Caco-2 (cell line): ENCODE measurements at regions of chr17 and their contacts with region 1.

Region 1: DNA sequence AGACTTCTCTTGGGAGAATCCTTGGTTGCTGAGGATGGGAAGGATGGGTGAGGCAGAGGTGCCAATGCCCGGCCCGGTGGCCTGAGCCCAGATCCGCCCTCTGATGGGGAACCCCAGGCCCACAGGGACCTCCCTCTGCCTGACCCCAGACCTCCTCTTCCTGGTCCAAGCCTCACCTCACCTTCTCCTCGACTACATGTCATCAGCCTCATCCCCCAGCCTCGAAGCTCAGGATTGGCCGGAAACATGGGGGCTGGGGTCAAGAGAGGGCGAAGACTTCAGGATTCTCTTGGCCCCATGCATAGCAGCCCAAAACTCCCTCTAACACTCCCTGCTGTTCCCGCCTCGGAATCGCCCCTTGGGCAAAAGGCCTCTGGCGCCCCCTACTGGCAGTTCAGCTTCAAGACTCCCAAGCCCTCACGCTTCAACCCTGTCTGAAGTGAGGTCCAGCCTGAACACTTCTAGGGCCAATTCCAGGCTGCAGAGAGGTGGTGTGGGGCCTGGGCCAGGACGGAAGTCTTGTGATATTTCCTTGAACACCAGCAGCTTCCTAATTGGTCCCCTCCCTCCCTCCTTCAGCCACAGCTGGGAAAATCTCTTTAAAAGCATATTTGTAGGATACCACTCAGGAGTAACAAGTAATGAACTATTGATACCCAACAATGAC is 47.2 kb downstream of the ARHGAP27 start:
- DNase-seq: peak; percentile 87 to 94
- H3K4me3 ChIP-seq: no peak overlapping the region
- H3K4me3 Mint-ChIP-seq: no peak overlapping the region
- H3K27ac Mint-ChIP-seq: peak overlapping the region; percentile 6
- H3K4me1 ChIP-seq: peaks cover 8% of the 10 kb centered on the region; the same call in 1 of the 2 replicates
- H3K4me1 Mint-ChIP-seq: peaks cover 28% of the 10 kb centered on the region
- H3K27me3 ChIP-seq: no peaks in the 10 kb centered on the region
- H3K27me3 Mint-ChIP-seq: peaks cover 3% of the 10 kb centered on the region
- CTCF ChIP-seq: peak; percentile 97 to 98

Region 2: DNA sequence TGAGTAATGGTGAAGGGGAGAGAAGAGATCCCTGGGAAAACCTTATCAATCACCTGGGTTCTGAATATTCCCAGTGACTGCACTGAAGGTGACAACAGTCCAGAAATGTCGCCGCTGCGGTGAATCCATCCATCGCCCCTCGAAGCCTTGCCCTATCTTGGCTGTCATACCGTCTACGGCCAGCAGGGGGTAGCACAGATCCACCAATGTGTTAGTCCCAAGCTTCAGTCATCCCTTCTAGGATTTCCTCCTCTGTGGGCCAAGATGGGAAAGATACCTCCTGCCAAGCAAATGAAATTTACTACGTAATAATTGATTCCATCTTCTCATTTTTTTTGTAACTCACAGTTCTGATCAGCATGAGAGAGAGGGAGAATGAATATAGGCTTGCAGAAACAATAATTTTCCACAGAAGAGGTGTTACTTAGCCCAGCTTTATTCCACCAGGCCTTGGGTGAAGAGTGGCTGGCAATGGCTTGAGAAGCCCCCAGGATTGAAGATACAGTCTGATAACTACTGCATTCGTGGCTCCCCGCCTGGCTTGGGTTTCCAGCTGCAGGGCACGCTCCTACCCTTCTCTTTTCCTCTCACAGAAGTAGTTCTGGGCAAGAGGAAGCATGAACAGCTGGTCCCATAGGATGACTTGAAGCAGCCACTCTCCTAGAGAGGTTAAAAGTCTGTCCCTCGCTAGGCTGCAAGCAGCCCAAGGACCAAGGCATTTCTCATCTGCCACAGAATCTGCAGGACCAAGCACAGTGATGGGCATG is 166.4 kb before region 1 on chr17:
- CTCF ChIA-PET with region 1: interaction called, 13 read pairs
- POLR2A ChIA-PET with region 1: no interaction called
- intact Hi-C with region 1: loop called (anchors 1 kb)
- DNase-seq: peak; percentile 86 to 92
- H3K4me3 ChIP-seq: no peak overlapping the region
- H3K4me3 Mint-ChIP-seq: no peak overlapping the region
- H3K27ac Mint-ChIP-seq: no peak overlapping the region
- H3K4me1 ChIP-seq: peaks cover 5% of the 10 kb centered on the region; the same call in 1 of the 2 replicates
- H3K4me1 Mint-ChIP-seq: no peaks in the 10 kb centered on the region
- H3K27me3 ChIP-seq: peaks cover 1% of the 10 kb centered on the region; the same call in 1 of the 2 replicates
- H3K27me3 Mint-ChIP-seq: peaks cover 17% of the 10 kb centered on the region
- CTCF ChIP-seq: peak; percentile 88 to 97

Region 3: GRCh38 chr17:45247429-45248131 is 137.9 kb before region 1 on chr17:
- CTCF ChIA-PET with region 1: interaction called, 4 read pairs
- POLR2A ChIA-PET with region 1: no interaction called
- intact Hi-C with region 1: loop called (anchors 1 kb)
- DNase-seq: peak; percentile 99
- H3K4me3 ChIP-seq: peak overlapping the region; percentile 63
- H3K4me3 Mint-ChIP-seq: peak overlapping the region; percentile 81
- H3K27ac Mint-ChIP-seq: peak overlapping the region; percentile 92
- H3K4me1 ChIP-seq: peaks cover 11% of the 10 kb centered on the region
- H3K4me1 Mint-ChIP-seq: peaks cover 10% of the 10 kb centered on the region
- H3K27me3 ChIP-seq: no peaks in the 10 kb centered on the region
- H3K27me3 Mint-ChIP-seq: peaks cover 2% of the 10 kb centered on the region
- CTCF ChIP-seq: no peak

Region 4: DNA sequence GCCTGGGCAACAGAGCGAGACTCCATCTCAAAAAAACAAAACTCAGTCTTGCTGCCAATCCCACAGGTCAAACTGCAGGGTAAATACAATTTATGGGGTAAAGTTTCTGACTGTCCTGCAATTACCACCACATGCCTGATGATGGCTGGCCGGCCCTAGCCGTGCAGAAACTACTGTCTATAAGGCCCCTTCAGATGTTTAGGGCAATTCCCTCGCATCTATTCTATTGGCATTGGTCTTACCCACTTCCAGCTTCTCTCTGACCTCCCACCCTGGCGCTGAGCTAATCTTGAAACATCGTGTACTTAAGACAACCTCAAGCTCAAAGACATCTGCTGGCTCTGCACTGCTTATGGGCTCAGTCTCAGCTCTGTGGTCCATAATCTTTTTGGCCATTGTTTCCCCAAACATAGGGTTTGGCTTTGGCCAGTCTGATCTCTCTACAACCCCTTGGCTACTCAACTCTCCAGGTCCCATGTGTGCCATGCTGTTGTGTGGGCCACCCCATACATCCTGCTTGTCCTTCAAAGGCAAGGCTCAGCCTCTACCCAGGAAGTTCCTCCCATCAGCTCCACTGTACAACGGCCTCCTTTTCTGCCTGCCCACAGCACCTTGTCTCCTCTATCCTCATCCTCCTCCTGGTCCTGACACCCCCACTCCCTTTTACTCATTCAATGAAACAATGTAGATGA is 85.3 kb before region 1 on chr17:
- CTCF ChIA-PET with region 1: interaction called, 10 read pairs
- POLR2A ChIA-PET with region 1: no interaction called
- intact Hi-C with region 1: no loop called
- DNase-seq: no peak
- H3K4me3 ChIP-seq: no peak overlapping the region
- H3K4me3 Mint-ChIP-seq: no peak overlapping the region
- H3K27ac Mint-ChIP-seq: peak overlapping the region; percentile 23
- H3K4me1 ChIP-seq: peaks cover 5% of the 10 kb centered on the region; the same call in 1 of the 2 replicates
- H3K4me1 Mint-ChIP-seq: no peaks in the 10 kb centered on the region
- H3K27me3 ChIP-seq: no peaks in the 10 kb centered on the region
- H3K27me3 Mint-ChIP-seq: no peaks in the 10 kb centered on the region
- CTCF ChIP-seq: no peak

Region 5: GRCh38 chr17:45317112-45317928 is 68.1 kb before region 1 on chr17:
- CTCF ChIA-PET with region 1: interaction called, 10 read pairs
- POLR2A ChIA-PET with region 1: no interaction called
- intact Hi-C with region 1: no loop called
- DNase-seq: peak; percentile 100
- H3K4me3 ChIP-seq: peak overlapping the region; percentile 63
- H3K4me3 Mint-ChIP-seq: peak overlapping the region; percentile 89
- H3K27ac Mint-ChIP-seq: peak overlapping the region; percentile 96
- H3K4me1 ChIP-seq: peaks cover 31% of the 10 kb centered on the region
- H3K4me1 Mint-ChIP-seq: peaks cover 49% of the 10 kb centered on the region
- H3K27me3 ChIP-seq: no peaks in the 10 kb centered on the region
- H3K27me3 Mint-ChIP-seq: no peaks in the 10 kb centered on the region
- CTCF ChIP-seq: peak in 1 of 2 experiments; percentile 5